Caco-2 (cell line): ENCODE measurements at regions of chr12 and their contacts with region 1.

Region 1: DNA sequence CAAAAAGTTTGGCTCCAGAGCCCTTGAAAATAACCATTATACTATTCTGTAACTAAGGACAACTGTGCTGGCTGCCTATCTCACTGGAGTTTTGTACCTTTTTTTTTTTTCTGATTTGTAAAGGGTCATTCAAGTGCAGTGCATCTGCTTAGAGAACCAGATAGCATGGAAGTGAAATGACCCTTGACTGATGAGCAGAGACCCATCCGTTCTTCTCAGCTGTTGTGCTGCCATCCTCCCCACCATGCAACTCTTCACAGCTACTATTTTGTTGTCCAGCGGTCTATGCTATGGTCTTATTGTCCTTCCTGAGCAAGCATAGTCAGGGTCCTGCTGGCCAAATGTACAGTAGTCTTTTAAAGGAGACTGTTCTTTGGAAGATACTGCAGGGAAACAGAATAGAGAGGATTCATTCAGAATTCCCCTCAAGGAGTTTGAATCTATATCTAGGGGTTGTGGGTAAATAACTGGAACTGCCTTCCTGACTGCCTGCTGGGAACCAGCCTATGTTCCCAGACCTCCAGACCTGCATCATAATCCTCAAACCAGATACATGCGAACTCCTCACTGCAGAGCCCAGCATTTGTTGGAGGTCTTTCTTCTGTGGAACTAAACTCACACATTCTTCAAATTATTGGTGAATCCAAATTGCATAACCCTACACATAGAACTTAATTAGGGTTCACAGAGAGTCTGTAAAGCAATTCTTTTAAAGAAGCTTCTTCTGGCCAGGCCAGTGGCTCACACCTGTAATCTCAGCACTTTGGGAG is 41.1 kb downstream of the GPR19 start:
- DNase-seq: no peak
- H3K4me3 ChIP-seq: no peak overlapping the region
- H3K4me3 Mint-ChIP-seq: no peak overlapping the region
- H3K27ac Mint-ChIP-seq: no peak overlapping the region
- H3K4me1 ChIP-seq: no peaks in the 10 kb centered on the region
- H3K4me1 Mint-ChIP-seq: no peaks in the 10 kb centered on the region
- H3K27me3 ChIP-seq: no peaks in the 10 kb centered on the region
- H3K27me3 Mint-ChIP-seq: no peaks in the 10 kb centered on the region
- CTCF ChIP-seq: no peak

Region 2: DNA sequence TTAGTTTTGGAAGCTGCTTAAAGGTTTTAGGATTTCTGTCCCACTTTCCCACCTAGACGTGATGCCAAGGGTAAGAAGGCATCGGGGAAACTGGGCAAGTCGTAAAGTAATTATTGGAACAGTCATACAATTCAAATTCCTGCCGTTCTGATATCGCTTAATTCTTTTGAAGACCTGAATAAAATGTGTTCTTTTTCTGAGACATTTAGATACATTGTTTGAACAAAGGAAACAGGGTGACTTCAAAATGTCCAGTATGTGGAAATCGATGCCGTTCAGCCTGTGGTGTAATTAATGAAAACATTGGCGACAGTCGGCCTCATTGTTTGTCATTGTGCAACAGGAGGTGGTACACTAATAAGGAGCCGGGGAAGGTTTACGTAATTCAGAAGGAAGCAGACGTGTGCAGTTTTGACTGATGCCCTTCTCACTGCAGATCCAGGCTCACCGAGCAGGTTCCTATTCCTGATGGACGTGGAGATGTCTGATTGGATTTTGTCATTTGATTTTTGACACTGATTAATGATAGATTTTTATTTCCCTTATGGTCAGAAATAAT is 205.3 kb before region 1 on chr12:
- CTCF ChIA-PET with region 1: no interaction called
- POLR2A ChIA-PET with region 1: no interaction called
- intact Hi-C with region 1: no loop called
- DNase-seq: peak; percentile 67 to 69
- H3K4me3 ChIP-seq: no peak overlapping the region
- H3K4me3 Mint-ChIP-seq: no peak overlapping the region
- H3K27ac Mint-ChIP-seq: peak overlapping the region; percentile 34
- H3K4me1 ChIP-seq: peaks cover 25% of the 10 kb centered on the region
- H3K4me1 Mint-ChIP-seq: peaks cover 26% of the 10 kb centered on the region
- H3K27me3 ChIP-seq: no peaks in the 10 kb centered on the region
- H3K27me3 Mint-ChIP-seq: no peaks in the 10 kb centered on the region
- CTCF ChIP-seq: no peak

Region 3: DNA sequence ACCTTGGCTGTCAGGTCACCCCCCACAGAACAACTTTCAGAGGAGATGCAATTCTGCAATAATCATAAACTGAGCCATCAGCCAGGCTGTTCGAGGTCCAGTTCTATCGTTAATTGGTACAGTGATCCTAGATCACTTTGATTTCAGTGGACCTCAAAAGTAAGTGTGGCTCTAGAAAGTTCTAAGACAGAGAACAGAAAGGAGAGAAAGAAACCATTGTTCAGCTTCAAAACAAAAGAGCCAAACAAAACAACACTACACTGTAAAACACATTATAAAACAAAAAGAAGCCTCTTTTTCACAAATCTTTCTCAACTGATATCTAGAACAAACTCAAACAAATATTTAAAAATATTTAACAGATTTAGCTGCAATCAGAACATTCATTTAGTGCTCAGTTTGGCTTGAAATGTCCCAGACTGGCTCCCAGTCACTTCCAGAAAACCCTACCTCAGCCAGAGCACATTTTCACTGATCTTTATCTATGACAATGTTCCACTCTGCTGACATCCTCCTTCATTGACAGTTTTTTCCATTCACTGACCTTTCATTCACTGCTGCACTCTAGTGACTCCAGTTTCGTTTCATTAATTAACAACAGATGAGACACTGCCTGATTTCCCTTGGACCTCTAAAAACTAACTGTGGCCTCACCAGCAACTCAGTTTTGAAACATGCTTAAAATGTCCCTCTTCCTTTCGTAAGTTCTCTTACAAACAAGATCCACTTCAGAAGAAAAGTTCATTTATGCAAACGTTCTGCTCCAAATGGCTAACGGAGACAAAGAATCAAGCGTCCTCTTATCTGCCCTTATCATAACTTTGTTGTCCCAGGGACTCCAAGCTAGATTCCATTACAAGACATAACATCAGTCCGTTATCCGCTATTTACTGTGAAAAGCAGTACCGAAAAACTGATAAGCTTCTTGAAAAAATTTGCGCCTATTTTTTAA is 149.1 kb before region 1 on chr12:
- CTCF ChIA-PET with region 1: no interaction called
- POLR2A ChIA-PET with region 1: no interaction called
- intact Hi-C with region 1: loop called (anchors 10 kb)
- DNase-seq: peak in 1 of 2 experiments; percentile 36
- H3K4me3 ChIP-seq: no peak overlapping the region
- H3K4me3 Mint-ChIP-seq: peak overlapping the region; percentile 42
- H3K27ac Mint-ChIP-seq: peak overlapping the region; percentile 19
- H3K4me1 ChIP-seq: peaks cover 37% of the 10 kb centered on the region
- H3K4me1 Mint-ChIP-seq: peaks cover 40% of the 10 kb centered on the region
- H3K27me3 ChIP-seq: no peaks in the 10 kb centered on the region
- H3K27me3 Mint-ChIP-seq: no peaks in the 10 kb centered on the region
- CTCF ChIP-seq: no peak

Region 4: DNA sequence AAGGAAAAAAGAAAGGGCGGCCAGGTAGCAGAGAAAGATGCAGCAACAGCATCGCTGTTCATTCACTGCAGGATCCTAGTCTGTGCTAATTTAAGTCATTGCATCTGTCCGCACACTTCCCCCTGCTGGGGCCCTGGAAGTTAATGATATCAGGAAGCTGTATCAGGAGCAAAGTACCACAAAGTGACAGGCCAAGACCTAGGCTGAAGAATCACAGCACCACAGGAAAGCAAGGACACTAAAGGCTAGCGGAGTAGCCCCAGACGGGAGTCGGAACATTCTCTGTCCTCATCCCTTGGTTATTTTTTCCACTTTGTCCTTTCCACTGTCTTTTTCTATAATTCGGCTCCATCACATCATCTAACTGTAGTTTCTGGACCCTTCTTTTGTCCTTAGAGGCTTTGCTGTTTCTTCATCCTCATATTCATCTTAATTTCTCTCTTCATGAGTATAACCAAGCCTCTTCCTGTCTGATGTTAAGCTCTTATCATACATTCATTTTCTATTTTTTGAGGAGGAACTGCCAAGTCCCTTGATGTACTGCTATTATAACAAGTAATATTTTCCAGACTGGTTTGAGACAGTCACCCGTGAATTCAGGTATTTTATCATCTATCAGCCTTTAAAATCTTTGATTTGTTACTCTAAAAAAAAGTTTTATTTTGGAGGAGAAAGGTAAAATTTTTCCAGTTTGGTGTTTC is 120.6 kb before region 1 on chr12:
- CTCF ChIA-PET with region 1: no interaction called
- POLR2A ChIA-PET with region 1: no interaction called
- intact Hi-C with region 1: no loop called
- DNase-seq: peak; percentile 58 to 74
- H3K4me3 ChIP-seq: no peak overlapping the region
- H3K4me3 Mint-ChIP-seq: peak overlapping the region; percentile 25
- H3K27ac Mint-ChIP-seq: peak overlapping the region; percentile 90
- H3K4me1 ChIP-seq: peaks cover 68% of the 10 kb centered on the region
- H3K4me1 Mint-ChIP-seq: peaks cover 44% of the 10 kb centered on the region
- H3K27me3 ChIP-seq: no peaks in the 10 kb centered on the region
- H3K27me3 Mint-ChIP-seq: no peaks in the 10 kb centered on the region
- CTCF ChIP-seq: no peak

Region 5: DNA sequence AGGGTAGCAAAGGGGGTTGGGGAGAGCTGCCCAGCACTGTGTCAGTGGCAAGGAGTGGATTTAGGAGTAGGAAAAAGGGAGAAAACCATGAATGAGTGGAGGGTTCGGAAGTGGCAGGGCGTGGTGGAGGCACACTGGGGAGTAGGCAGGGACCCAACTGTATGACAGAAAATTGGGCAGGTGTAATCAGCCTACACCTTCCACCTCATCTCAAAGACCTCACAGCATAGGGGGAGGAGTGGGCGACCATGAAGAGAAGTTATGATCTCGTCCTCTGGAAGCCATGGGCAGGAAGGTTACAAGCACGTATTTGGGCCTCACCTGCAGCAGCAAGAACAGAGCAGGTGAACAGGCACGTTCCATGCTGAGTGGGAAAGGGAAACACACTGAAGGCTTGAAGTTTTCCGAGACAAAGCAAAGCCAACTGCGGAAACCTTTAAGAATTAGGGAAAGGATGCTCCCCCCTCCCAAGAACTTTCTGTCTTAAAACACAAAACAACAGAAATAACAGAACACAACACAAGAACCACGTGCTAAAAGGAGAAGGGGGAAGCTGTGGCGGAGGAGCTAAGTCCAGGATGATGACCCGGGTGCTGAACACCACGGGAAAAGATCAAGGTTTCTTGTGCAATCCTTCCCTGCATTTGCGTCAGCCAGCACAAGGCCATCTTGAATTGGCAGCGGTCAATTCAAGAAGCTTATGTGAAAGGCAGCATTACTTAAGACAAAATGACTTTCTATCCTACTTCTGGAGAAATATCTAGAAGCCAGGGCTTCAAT is 54.4 kb before region 1 on chr12:
- CTCF ChIA-PET with region 1: no interaction called
- POLR2A ChIA-PET with region 1: no interaction called
- intact Hi-C with region 1: no loop called
- DNase-seq: no peak
- H3K4me3 ChIP-seq: no peak overlapping the region
- H3K4me3 Mint-ChIP-seq: no peak overlapping the region
- H3K27ac Mint-ChIP-seq: peak overlapping the region; percentile 65
- H3K4me1 ChIP-seq: peaks cover 13% of the 10 kb centered on the region
- H3K4me1 Mint-ChIP-seq: peaks cover 15% of the 10 kb centered on the region
- H3K27me3 ChIP-seq: no peaks in the 10 kb centered on the region
- H3K27me3 Mint-ChIP-seq: no peaks in the 10 kb centered on the region
- CTCF ChIP-seq: no peak